Activated CD4-positive, alpha-beta T cell treated with anti-CD3 and anti-CD28 coated beads for 36 hours (primary cell): ENCODE measurements at regions of chrX and their contacts with region 1.

Region 1: DNA sequence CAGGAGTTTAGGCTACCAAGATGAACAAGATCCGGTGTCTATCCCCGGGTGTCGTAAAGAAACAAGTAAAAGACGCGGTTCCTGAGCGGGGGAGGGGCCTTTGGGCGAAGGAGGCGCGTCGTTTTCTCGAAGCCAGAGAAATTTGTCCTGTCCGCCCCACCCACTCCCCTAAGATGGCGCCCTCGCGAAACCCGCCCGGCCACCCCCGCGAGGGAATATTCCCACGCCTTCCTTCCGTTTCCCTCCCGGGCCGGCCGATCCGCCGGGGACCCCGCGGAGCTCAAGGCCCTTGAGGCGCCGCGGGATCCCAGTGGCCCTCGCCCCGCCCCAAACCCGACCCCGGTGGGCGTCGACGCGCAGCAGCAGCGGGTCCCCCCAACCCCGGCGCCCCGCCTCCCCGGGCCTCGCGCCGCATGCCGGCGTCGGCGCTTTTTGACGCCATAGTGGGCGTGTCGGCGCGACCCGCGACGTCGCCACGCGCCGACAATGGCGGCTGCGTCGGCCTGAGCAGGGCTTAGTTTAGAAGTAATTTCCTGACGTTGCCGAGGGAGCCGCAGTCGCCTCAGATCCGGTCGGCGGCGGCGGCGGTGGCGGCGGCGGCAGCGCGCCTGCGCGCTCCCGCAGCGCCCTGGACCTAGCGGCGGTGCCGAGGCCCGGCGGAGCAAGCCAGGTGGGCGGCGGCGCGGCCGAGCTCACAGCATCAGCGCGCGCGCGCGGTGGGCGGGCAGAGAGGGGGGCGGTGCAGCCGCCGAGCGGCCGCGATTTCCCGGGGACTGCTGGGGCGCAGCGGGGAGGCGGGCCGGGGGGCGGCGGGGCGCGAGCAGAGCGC is at the start of gene HTATSF1:
- DNase-seq: peak; percentile 92
- ATAC-seq: peak; percentile 76
- H3K4me3 Mint-ChIP-seq: peak within 1 kb of the TSS; percentile 83
- H3K27ac Mint-ChIP-seq: peak within 1 kb of the TSS; percentile 92
- H3K4me1 Mint-ChIP-seq: peaks cover 18% of the 10 kb centered on the region
- H3K27me3 Mint-ChIP-seq: no peaks in the 10 kb centered on the region
- total RNA-seq, gene HTATSF1: 34.8 to 42.3 TPM

Region 2: GRCh38 chrX:135973548-135974278 is 523.3 kb before region 1 on chrX and contains the start of gene MMGT1:
- CTCF ChIA-PET with region 1: no interaction called
- POLR2A ChIA-PET with region 1: no interaction called
- intact Hi-C with region 1: loop called in 1 of 2 experiments (anchors 2 kb)
- DNase-seq: peak; percentile 92
- ATAC-seq: peak; percentile 92
- H3K4me3 Mint-ChIP-seq: peak within 1 kb of the TSS; percentile 97
- H3K27ac Mint-ChIP-seq: peak within 1 kb of the TSS; percentile 97
- H3K4me1 Mint-ChIP-seq: peaks cover 34% of the 10 kb centered on the region
- H3K27me3 Mint-ChIP-seq: no peaks in the 10 kb centered on the region
- total RNA-seq, gene MMGT1: 16.1 to 18.1 TPM

Region 3: GRCh38 chrX:136147315-136147901 is 349.6 kb before region 1 on chrX and contains the start of gene FHL1:
- CTCF ChIA-PET with region 1: no interaction called
- POLR2A ChIA-PET with region 1: no interaction called
- intact Hi-C with region 1: loop called in 1 of 2 experiments (anchors 5 kb)
- DNase-seq: peak; percentile 69
- ATAC-seq: peak; percentile 63
- H3K4me3 Mint-ChIP-seq: peak within 1 kb of the TSS; percentile 80
- H3K27ac Mint-ChIP-seq: peak within 1 kb of the TSS; percentile 74
- H3K4me1 Mint-ChIP-seq: peaks cover 32% of the 10 kb centered on the region
- H3K27me3 Mint-ChIP-seq: no peaks in the 10 kb centered on the region
- total RNA-seq, gene FHL1: 19.3 to 19.8 TPM

Region 4: DNA sequence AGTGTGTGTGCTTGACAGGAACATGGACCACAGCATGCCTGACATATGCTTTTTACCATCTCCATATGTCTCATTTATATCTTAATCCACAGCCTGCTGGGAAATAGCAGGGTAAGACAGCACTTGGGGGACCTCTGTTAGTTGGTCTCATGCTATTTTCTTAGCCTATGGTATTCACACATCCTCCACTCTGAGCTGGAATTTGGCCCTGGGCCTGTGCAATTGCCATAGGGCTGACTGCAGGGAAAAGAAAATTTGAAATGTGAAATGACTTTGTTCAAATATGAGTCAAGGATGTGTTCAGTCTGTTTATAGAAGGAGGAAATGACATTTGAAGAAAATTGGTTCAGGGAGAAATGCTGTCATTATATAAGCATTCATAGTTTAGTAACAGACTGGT is 236.2 kb before region 1 on chrX:
- CTCF ChIA-PET with region 1: no interaction called
- POLR2A ChIA-PET with region 1: no interaction called
- intact Hi-C with region 1: no loop called
- DNase-seq: no peak
- ATAC-seq: peak; percentile 23
- H3K4me3 Mint-ChIP-seq: no peak overlapping the region
- H3K27ac Mint-ChIP-seq: no peak overlapping the region
- H3K4me1 Mint-ChIP-seq: peaks cover 20% of the 10 kb centered on the region
- H3K27me3 Mint-ChIP-seq: no peaks in the 10 kb centered on the region

Region 5: DNA sequence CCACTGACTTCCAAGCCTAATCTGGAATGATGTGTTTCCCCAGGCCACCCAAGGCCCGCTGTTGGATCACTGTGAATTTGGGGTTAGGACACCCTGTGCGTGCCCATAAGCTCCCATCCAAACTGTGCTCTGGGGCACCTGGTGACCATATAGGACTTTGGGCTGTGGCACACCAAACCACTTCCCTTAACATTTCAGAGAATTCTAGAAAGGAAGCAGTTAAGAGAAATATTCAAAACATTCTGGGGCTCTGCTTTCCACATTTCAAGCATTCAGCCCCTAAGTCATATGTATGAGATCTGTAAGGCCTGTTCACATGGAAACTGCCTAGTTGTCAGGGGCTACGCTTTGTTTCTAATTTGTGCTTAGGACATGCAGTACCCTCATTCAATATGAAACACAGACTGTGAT is 49.4 kb after region 1 on chrX:
- CTCF ChIA-PET with region 1: no interaction called
- POLR2A ChIA-PET with region 1: no interaction called
- intact Hi-C with region 1: no loop called
- DNase-seq: no peak
- ATAC-seq: peak; percentile 51
- H3K4me3 Mint-ChIP-seq: no peak overlapping the region
- H3K27ac Mint-ChIP-seq: no peak overlapping the region
- H3K4me1 Mint-ChIP-seq: peaks cover 26% of the 10 kb centered on the region
- H3K27me3 Mint-ChIP-seq: no peaks in the 10 kb centered on the region

Region 6: GRCh38 chrX:136577552-136577951 is 80.6 kb after region 1 on chrX:
- CTCF ChIA-PET with region 1: interaction called, 3 read pairs
- POLR2A ChIA-PET with region 1: no interaction called
- intact Hi-C with region 1: loop called (anchors 1 to 5 kb)
- DNase-seq: peak; percentile 84
- ATAC-seq: peak; percentile 97
- H3K4me3 Mint-ChIP-seq: peak overlapping the region; percentile 15
- H3K27ac Mint-ChIP-seq: peak overlapping the region; percentile 77
- H3K4me1 Mint-ChIP-seq: peaks cover 41% of the 10 kb centered on the region
- H3K27me3 Mint-ChIP-seq: no peaks in the 10 kb centered on the region

Region 7: DNA sequence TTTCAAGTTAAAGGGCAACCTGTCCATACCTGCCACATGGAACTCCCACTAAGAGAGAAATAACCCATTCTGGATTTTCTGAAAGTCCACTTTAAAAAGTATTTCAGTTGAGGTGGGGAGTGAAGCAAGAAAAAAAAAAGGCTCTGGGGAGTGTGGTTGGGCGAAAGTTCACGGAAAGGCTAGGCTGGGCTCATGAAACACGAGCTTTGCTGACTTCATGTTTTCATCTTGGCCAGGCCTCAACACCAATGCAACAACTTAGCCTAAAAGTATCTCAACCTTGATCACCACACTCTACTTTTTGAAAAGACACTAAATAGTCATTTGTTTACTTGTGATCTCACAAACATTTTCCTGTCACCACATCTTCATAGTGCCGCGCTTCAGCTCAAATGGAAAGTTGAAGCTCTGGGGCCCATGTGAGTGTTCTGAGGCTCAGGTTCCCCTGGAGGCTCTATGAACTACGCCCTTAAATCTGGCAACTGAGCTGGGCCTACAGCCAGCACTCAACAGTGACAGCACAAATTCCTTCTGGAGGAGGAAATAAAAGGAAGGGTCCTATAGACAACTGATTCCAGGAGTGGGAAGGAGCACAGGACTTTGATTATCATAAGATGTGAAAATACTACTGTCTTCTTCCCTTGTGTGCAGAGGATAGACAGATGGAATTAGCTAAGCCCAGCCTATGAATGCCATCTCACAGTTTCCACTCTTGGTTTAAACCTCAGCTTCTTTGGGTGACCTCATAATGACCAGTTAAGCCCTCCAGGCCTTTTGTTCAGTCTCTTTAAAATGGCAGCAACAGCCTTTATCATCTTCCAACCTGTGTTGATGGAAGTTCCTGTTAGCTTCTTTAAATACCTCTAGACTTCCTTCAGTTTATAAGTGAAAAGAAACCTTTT is 156.1 kb after region 1 on chrX:
- CTCF ChIA-PET with region 1: no interaction called
- POLR2A ChIA-PET with region 1: no interaction called
- intact Hi-C with region 1: loop called (anchors 2 to 5 kb)
- DNase-seq: peak; percentile 61
- ATAC-seq: peak; percentile 56
- H3K4me3 Mint-ChIP-seq: peak overlapping the region; percentile 96
- H3K27ac Mint-ChIP-seq: peak overlapping the region; percentile 100
- H3K4me1 Mint-ChIP-seq: peaks cover 43% of the 10 kb centered on the region
- H3K27me3 Mint-ChIP-seq: no peaks in the 10 kb centered on the region

Region 8: DNA sequence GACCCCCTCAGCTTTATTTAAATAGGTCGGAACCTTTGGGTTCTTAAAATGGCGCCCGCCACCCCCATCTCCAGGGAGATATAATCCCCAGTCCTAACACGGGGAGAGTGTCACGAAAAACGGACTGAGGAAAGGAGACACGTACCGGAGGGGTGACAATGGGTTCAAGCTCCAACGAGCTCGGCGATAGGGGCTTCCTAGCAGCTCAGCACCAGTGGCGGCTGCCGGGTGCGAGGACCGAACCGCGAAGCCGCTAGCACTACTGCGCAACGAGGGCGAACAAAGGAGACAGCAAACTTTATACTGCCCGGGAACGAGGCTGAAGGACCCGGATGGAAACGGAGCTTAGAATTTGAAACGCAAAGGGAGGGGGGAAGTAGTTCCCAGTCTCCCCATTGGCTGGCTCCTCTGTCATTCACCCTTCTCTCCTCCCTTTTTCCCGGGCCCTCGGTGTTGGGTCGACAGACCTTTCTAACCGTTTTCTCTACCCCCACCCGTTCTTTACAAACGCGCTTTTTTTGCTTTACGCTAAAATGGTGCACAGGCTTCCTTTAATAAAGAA is 383.5 kb after region 1 on chrX and contains the start of gene RBMX:
- CTCF ChIA-PET with region 1: no interaction called
- POLR2A ChIA-PET with region 1: interaction called, 4 read pairs
- intact Hi-C with region 1: loop called in 1 of 2 experiments (anchors 1 kb)
- DNase-seq: peak; percentile 92
- ATAC-seq: peak; percentile 93
- H3K4me3 Mint-ChIP-seq: peak within 1 kb of the TSS; percentile 100
- H3K27ac Mint-ChIP-seq: peak within 1 kb of the TSS; percentile 100
- H3K4me1 Mint-ChIP-seq: peaks cover 19% of the 10 kb centered on the region
- H3K27me3 Mint-ChIP-seq: no peaks in the 10 kb centered on the region
- total RNA-seq, gene RBMX: 320 to 414 TPM